ENCODE measurements at regions of chr14 and their contacts with region 1.

Region 1: DNA sequence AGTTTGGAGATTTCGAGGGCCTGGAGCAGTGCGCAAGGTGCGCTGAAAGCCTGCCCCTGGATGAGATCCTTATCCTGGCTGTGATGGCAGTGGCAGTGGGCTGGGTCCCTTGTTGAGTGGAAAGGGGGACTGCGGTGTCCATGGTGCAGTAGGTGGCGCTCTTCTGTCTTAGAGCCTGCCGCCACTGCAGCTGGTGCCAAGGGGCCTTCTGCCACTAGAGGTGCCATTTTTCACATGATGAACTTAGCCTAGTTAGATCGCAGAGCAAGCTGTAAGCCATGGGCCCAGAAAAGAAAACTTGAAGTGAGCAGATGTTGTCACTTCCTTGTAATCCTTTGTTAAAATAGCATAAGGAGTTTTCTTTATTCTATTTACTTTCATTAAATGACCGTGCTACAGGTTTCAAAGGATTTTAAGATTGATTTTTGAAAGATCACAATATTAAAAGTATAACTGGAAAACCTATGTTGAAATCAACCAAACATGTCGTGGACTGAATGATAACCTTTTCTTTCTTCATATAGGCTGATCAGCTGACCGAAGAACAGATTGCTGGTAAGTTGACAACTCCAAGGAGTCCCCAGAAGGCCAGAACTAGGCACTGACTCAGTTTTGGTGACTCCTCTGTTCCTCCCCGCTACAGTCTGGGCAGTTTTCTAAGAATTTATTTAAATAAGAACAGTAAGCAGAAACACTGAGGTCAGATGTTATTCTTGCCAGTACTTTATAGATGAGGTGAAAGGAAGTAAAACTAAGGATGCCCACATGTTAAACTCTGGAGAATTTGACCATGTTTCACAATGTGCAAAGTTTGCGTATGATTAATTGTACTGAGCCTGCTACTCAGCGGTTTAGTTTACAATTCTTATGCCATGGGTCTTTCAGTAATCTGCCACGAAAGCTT is 3.0 kb downstream of the CALM1 start:
- DNase-seq: peak; percentile 96

Region 2: DNA sequence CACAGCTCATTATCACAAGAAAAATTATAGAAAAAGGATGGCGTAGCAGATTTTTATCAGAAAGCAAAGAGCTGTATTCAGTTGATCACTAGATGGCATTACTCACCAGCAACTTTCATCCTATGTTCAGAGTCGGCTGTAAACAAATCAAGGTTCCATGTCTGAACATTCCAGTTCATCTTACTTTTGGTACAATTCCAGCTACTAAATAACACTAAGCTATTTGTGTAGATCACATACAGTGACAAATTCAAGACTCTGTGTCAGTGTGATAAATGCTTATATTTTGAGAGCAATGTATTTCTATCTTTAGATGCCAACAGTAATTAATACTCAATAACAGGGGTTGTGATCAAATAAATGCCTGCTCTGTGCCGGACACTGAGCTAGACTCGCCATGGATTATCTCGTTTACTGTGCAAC is 98.1 kb before region 1 on chr14:
- intact Hi-C with region 1: loop called in 1 of 2 experiments (anchors 10 kb)
- DNase-seq: no peak

Region 3: DNA sequence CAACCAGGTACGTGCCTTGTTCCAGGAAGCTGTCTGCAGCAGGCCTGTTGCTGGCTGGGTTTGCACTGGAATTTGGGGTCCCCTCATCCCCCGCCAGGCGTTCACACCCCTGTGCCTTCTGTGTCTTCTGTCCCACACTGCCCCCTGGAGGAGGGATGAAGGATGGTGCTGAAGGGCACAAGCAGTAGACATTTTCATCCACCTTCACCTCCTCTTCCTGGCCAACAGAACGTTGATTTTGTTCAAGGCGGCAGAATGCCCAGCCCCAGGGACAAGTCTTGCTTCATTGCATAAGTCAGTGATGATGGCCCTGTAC is 119.1 kb after region 1 on chr14:
- intact Hi-C with region 1: loop called in 1 of 2 experiments (anchors 5 kb)
- DNase-seq: peak; percentile 79

Region 4: GRCh38 chr14:90697577-90698206 is 297.9 kb after region 1 on chr14:
- intact Hi-C with region 1: loop called in 1 of 2 experiments (anchors 2 kb)
- DNase-seq: peak; percentile 95

Region 5: GRCh38 chr14:90758028-90758889 is 358.5 kb after region 1 on chr14:
- intact Hi-C with region 1: loop called in 1 of 2 experiments (anchors 10 kb)
- DNase-seq: peak; percentile 98